Sciatic nerve (tissue), 2 donors: ENCODE measurements at regions of chr6 and their contacts with region 1.

Region 1: GRCh38 chr6:111620169-111620568 is 14.5 kb upstream of the TRAF3IP2 start:
- DNase-seq: no peak
- ATAC-seq: peak; percentile 47

Region 2: DNA sequence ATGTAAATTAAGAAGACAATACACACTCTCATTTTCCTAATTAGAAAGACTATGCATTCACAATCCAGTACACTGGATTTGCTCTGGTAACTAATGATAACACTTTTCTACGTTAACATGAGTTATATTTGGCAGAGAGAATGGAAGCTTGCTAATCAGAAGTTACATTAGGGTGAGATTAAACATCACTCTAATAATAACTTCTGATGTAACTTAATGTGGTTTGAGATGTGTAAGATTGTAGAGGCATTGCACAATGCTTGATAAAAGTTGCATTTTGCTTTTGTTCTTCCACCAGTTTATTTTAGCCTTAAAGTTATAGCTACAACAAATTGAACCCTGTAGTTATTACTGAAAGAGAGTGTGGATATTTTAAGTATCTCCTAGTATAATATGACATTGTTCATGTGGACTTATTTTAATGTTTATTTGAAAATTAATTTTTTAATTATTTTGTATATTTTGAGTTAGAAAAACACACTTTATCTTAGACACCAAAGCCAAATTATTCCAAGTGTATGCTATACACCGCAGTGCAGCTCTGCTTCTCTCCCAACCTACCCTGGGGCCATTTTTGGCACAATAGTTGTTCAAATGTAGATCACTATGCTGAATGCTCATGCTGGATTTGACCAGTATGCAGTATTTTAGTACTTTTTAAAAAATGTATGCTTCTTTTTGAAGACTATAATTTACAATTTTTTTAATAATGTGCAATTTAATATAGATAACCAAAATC is 389.6 kb before region 1 on chr6:
- intact Hi-C with region 1: no loop called
- DNase-seq: no peak
- ATAC-seq: no peak

Region 3: DNA sequence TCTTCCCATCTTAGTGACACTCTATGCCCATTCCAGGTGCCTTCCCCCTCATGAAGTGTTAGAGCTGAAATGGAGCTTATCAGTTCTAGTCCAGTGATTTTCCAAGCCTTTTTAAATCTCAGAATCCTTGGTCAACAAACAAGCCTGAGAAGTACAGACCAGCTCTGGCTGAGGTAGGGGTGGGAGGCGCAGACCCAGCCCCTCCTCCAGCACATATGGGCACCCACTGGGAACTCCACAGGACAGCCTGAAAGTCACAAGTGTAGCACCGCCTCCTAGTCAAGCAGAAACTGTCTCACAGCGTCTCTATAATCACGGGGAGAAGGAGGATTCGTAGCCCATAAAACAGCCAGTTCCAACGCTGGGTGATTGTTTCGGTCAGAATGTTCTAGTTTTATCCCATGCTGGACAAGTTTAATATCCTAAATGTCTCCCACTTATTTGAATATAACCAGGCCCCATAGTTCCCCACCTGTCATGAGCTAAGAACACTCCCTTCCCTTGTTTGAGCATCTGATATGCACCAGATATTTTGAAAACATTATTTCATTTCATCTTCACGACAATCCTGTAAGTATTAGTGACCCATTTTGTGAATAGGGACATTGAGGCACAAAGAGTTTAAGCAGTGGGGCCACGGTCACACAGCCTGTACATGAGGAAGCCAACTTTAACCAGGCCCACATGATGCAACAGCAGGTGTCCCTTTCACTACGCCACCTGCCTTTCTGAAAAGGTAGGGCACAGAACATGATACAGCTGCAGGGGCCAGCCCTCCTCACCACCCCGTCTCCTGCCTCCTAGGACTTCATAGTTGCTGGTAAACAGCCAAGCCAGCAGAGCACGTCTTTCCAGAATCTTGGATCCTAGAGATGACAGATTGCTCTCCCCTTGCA is 54.6 kb before region 1 on chr6:
- intact Hi-C with region 1: loop called (anchors 2 kb)
- DNase-seq: no peak
- ATAC-seq: peak; percentile 9

Region 4: GRCh38 chr6:111873178-111874024 is 253.2 kb after region 1 on chr6 and contains the start of gene FYN:
- intact Hi-C with region 1: no loop called
- DNase-seq: peak; percentile 99
- ATAC-seq: peak; percentile 99
- total RNA-seq, gene FYN: 173 TPM

Region 5: GRCh38 chr6:112549749-112550148 is 929.6 kb after region 1 on chr6:
- intact Hi-C with region 1: no loop called
- DNase-seq: no peak
- ATAC-seq: no peak